Natural killer cell (primary cell): ENCODE measurements at regions of chr6 and their contacts with region 1.

Region 1: GRCh38 chr6:37018198-37019064 is 13.0 kb downstream of the FGD2 start:
- DNase-seq: peak; percentile 81 to 92
- ATAC-seq: peak; percentile 92 to 96 (median 92)
- H3K4me3 ChIP-seq: no peak overlapping the region
- H3K4me3 Mint-ChIP-seq: no peak overlapping the region
- H3K27ac ChIP-seq: peak overlapping the region; percentile 34
- H3K27ac Mint-ChIP-seq: peak overlapping the region in 1 of 2 donors; percentile 64
- H3K4me1 ChIP-seq: peaks cover 32% of the 10 kb centered on the region
- H3K4me1 Mint-ChIP-seq: peaks cover 33 to 45% of the 10 kb centered on the region in 2 donors
- H3K27me3 ChIP-seq: no peaks in the 10 kb centered on the region
- H3K27me3 Mint-ChIP-seq: no peaks in the 10 kb centered on the region
- CTCF ChIP-seq: peak; percentile 91

Region 2: DNA sequence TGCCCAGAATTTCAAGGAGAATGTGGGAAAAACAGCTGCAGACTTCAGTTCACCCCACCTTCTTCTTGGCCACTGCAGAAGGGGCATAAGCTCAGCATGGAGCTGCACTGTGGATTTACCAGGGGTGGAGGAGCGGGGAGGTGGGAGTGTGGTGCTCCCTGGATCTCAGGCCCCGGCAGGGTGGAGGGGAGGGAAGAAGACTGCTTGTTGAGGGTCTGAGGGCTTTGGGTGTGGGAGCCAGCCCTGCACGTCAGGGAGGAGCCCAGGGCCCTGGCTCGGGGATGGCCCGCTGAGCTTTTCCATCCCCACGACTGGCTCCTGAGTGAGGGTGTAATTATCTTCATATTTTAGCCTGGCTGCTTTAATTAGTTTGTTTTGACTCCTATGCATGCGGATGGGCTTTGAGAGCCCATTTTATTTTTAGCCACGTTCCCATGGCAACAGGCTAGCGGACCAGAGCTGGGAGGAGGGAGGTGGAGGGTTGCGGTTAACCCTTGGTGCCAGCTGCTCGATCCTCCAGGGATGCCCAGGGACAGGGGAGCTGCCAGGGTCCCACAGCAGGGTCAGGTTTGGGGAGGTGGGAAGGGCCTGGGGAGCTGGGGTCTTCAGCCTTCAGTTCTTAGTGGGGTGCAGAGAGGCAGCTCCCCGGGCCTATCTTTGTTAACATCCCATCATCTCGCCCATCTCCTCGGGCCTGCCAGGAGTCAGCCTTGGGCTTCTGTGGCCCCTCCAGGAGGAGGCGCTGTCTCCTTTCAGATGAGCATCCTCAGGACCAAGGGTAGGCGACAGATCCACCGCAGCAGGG is 252.6 kb before region 1 on chr6:
- intact Hi-C with region 1: loop called (anchors 1 kb)
- DNase-seq: peak; percentile 76 to 90
- ATAC-seq: peak; percentile 82 to 93 (median 87)
- H3K4me3 ChIP-seq: no peak overlapping the region
- H3K4me3 Mint-ChIP-seq: peak overlapping the region; percentile 35
- H3K27ac ChIP-seq: no peak overlapping the region
- H3K27ac Mint-ChIP-seq: no peak overlapping the region
- H3K4me1 ChIP-seq: peaks cover 53% of the 10 kb centered on the region
- H3K4me1 Mint-ChIP-seq: peaks cover 30 to 36% of the 10 kb centered on the region in 2 donors
- H3K27me3 ChIP-seq: no peaks in the 10 kb centered on the region
- H3K27me3 Mint-ChIP-seq: no peaks in the 10 kb centered on the region
- CTCF ChIP-seq: peak; percentile 91

Region 3: GRCh38 chr6:36947570-36948351 is 70.7 kb before region 1 on chr6:
- intact Hi-C with region 1: no loop called
- DNase-seq: peak in 1 of 2 donors; percentile 68
- ATAC-seq: peak in 2 of 3 donors; percentile 56 to 80
- H3K4me3 ChIP-seq: no peak overlapping the region
- H3K4me3 Mint-ChIP-seq: no peak overlapping the region
- H3K27ac ChIP-seq: no peak overlapping the region
- H3K27ac Mint-ChIP-seq: no peak overlapping the region
- H3K4me1 ChIP-seq: peaks cover 12% of the 10 kb centered on the region
- H3K4me1 Mint-ChIP-seq: peaks cover 4 to 6% of the 10 kb centered on the region in 2 donors
- H3K27me3 ChIP-seq: no peaks in the 10 kb centered on the region
- H3K27me3 Mint-ChIP-seq: peaks cover 27 to 52% of the 10 kb centered on the region in 2 donors
- CTCF ChIP-seq: no peak

Region 4: GRCh38 chr6:36985808-36986703 is 32.4 kb before region 1 on chr6 and contains the start of gene MTCH1:
- intact Hi-C with region 1: loop called (anchors 1 kb)
- DNase-seq: peak; percentile 93 to 95
- ATAC-seq: peak; percentile 86 to 96 (median 89)
- H3K4me3 ChIP-seq: peak within 1 kb of the TSS; percentile 99
- H3K4me3 Mint-ChIP-seq: peak within 1 kb of the TSS; percentile 98
- H3K27ac ChIP-seq: peak within 1 kb of the TSS; percentile 78
- H3K27ac Mint-ChIP-seq: peak within 1 kb of the TSS in 1 of 2 donors; percentile 92
- H3K4me1 ChIP-seq: peaks cover 27% of the 10 kb centered on the region
- H3K4me1 Mint-ChIP-seq: peaks cover 20 to 24% of the 10 kb centered on the region in 2 donors
- H3K27me3 ChIP-seq: no peaks in the 10 kb centered on the region
- H3K27me3 Mint-ChIP-seq: peaks cover 3 to 12% of the 10 kb centered on the region in 2 donors
- CTCF ChIP-seq: no peak
- total RNA-seq, gene MTCH1: 158 to 180 (median 162) TPM

Region 5: DNA sequence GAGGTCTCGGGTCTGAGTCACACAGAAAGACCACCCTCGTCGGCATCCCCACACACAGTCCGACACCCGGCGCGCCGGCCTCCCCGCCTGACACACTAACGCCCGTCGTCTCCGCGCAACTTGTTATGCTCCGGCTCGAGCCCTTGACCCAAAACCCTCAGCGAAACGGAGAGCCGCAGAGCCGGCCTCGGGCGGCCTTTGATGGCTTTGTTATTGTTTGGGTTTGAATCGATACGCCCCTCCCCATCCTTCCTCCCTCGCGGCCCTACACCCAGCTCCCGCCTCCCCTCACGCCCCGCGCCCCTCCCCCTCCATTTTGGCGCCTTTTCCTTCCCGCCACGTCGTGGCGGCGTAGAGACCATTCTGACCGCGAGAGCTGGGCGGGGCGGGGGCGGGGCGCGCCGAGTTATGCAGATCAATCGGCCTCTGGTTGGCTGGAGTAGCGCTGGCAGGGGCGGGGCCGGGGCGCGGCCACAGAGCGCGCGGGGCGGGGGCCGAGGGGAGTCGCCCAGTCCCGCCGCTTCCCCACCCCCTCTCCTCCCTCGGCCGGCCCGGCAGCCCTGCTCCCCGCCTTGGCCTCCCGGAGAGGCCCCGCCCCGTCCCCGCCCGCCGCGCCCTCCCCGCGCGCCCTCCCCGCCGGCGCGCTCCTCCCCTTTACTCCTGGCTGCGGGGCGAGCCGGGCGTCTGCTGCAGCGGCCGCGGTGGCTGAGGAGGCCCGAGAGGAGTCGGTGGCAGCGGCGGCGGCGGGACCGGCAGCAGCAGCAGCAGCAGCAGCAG is 151.3 kb after region 1 on chr6 and contains the start of gene PIM1:
- intact Hi-C with region 1: loop called (anchors 1 kb)
- DNase-seq: peak; percentile 90 to 98
- ATAC-seq: peak; percentile 79 to 95 (median 85)
- H3K4me3 ChIP-seq: peak within 1 kb of the TSS; percentile 92
- H3K4me3 Mint-ChIP-seq: peak within 1 kb of the TSS; percentile 99
- H3K27ac ChIP-seq: peak within 1 kb of the TSS; percentile 75
- H3K27ac Mint-ChIP-seq: peak within 1 kb of the TSS; percentile 95 to 99
- H3K4me1 ChIP-seq: peaks cover 39% of the 10 kb centered on the region
- H3K4me1 Mint-ChIP-seq: peaks cover 41 to 47% of the 10 kb centered on the region in 2 donors
- H3K27me3 ChIP-seq: no peaks in the 10 kb centered on the region
- H3K27me3 Mint-ChIP-seq: no peaks in the 10 kb centered on the region
- CTCF ChIP-seq: no peak
- total RNA-seq, gene PIM1: 188 to 242 (median 215) TPM

Region 6: GRCh38 chr6:37314487-37315156 is 296.2 kb after region 1 on chr6:
- intact Hi-C with region 1: loop called (anchors 2 kb)
- DNase-seq: peak in 1 of 2 donors; percentile 57
- ATAC-seq: peak; percentile 56 to 90 (median 78)
- H3K4me3 ChIP-seq: no peak overlapping the region
- H3K4me3 Mint-ChIP-seq: no peak overlapping the region
- H3K27ac ChIP-seq: no peak overlapping the region
- H3K27ac Mint-ChIP-seq: peak overlapping the region in 1 of 2 donors; percentile 17
- H3K4me1 ChIP-seq: peaks cover 6% of the 10 kb centered on the region
- H3K4me1 Mint-ChIP-seq: peaks cover 5 to 6% of the 10 kb centered on the region in 2 donors
- H3K27me3 ChIP-seq: no peaks in the 10 kb centered on the region
- H3K27me3 Mint-ChIP-seq: no peaks in the 10 kb centered on the region
- CTCF ChIP-seq: peak; percentile 15